ENCODE measurements at regions of chrX and their contacts with region 1.

Region 1: GRCh38 chrX:103310542-103311398 is at the start of gene BEX2:
- DNase-seq: peak; percentile 52 to 73
- H3K4me3 ChIP-seq: peak within 1 kb of the TSS; percentile 57; the same call in 1 of the 2 replicates
- H3K27ac ChIP-seq: no peak within 1 kb of the TSS
- H3K4me1 ChIP-seq: no peaks in the 10 kb centered on the region
- H3K27me3 ChIP-seq: no peaks in the 10 kb centered on the region
- CTCF ChIP-seq: no peak
- total RNA-seq, gene BEX2: 4.7 and 6.9 TPM in 2 replicates

Region 2: GRCh38 chrX:103254921-103255493 is 55.8 kb before region 1 on chrX and contains the start of gene TCEAL8:
- CTCF ChIA-PET with region 1: no interaction called
- POLR2A ChIA-PET with region 1: no interaction called
- intact Hi-C with region 1: loop called (anchors 2 kb)
- DNase-seq: peak; percentile 46 to 48
- H3K4me3 ChIP-seq: peak within 1 kb of the TSS; percentile 76
- H3K27ac ChIP-seq: no peak within 1 kb of the TSS
- H3K4me1 ChIP-seq: no peaks in the 10 kb centered on the region
- H3K27me3 ChIP-seq: no peaks in the 10 kb centered on the region
- CTCF ChIP-seq: no peak
- total RNA-seq, gene TCEAL8: 31.5 and 34.4 TPM in 2 replicates

Region 3: DNA sequence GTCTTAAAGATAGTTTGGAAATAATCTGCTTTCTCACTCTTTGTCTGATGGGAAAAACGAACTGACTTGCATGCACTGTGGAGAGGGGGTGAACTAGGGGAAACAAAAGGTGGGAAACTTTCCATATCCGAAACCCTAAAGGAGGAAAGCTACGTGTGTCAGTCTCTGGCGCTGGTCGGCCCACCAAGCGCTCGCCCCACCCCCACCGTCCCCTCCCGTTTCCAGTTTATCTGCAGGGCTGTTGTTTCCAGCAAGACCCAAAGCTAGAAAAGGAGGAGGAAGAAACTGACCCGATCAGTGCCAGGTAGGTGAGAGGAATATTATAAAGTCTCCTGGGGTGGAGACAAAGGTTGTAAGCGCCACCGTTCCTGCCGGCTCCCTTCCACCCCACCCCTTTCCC is 46.1 kb after region 1 on chrX:
- CTCF ChIA-PET with region 1: no interaction called
- POLR2A ChIA-PET with region 1: no interaction called
- intact Hi-C with region 1: no loop called
- DNase-seq: no peak
- H3K4me3 ChIP-seq: peak overlapping the region; percentile 72
- H3K27ac ChIP-seq: 0 out of 2 replicates have a peak overlapping the region, but pooled peaks have one; percentile 9
- H3K4me1 ChIP-seq: peaks cover 14% of the 10 kb centered on the region; the same call in 1 of the 2 replicates
- H3K27me3 ChIP-seq: no peaks in the 10 kb centered on the region
- CTCF ChIP-seq: no peak

Measured in PC-9 (cell line).